Activated B cell treated with CpG ODN at 0.5 μM for 24 hours (primary cell): ENCODE measurements at regions of chr10 and their contacts with region 1.

Region 1: GRCh38 chr10:124601431-124602120 is 140.0 kb downstream of the LHPP start:
- DNase-seq: peak; percentile 75
- ATAC-seq: peak; percentile 86
- H3K4me3 Mint-ChIP-seq: peak overlapping the region; percentile 70
- H3K27ac Mint-ChIP-seq: peak overlapping the region; percentile 94
- H3K4me1 Mint-ChIP-seq: peaks cover 97% of the 10 kb centered on the region
- H3K27me3 Mint-ChIP-seq: no peaks in the 10 kb centered on the region
- CTCF ChIP-seq: no peak

Region 2: DNA sequence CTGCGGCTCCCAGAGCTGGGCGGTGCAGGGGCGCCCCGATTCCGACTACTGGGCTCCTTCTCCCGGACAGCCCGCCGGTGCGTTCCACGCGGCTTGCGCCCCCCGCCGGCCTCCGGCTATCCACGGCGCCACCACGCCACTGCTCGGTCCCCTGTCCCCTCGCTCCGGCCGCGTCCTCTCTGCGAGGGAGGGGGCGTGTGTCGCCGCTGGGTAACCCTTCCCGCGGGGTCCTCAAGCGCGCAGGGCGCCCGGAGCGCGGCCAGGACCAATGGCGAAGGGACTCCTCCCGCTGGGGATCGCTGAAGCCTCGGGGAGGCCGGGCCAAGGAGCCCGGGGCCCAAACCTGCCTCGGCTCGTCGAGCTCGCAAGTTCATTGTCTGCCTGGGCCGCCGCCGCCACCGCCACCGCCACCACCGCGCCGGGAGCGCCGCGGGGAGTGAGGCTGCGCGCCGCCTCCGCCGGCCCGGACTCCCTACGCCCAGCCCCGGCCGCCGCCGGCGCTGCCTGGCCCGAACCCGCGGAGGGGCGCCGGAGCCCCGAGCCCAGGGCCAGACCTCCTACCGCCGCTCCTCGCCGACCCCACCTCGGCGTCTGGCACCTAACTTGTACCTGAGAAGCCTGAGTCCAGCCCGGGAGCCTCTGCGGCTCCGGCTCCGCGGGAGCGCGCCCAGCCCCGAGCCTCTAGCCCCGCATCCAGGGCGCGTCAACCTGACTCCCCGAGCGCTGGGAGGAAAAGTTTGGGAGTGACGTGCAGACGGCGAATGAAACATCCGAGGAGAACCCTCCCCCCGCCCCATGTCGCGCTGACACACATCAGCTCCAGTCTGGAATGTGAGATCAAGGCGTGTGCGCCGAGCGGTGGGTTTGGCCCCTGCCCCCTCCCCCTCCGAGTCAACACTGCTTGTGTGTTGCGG is 508.5 kb before region 1 on chr10 and contains the start of gene CHST15:
- CTCF ChIA-PET with region 1: no interaction called
- POLR2A ChIA-PET with region 1: no interaction called
- intact Hi-C with region 1: loop called (anchors 10 kb)
- DNase-seq: peak; percentile 55
- ATAC-seq: peak; percentile 43
- H3K4me3 Mint-ChIP-seq: peak within 1 kb of the TSS; percentile 90
- H3K27ac Mint-ChIP-seq: peak within 1 kb of the TSS; percentile 71
- H3K4me1 Mint-ChIP-seq: peaks cover 51% of the 10 kb centered on the region
- H3K27me3 Mint-ChIP-seq: no peaks in the 10 kb centered on the region
- CTCF ChIP-seq: no peak
- total RNA-seq, gene CHST15: 12.1 and 13.8 TPM in 2 replicates

Region 3: DNA sequence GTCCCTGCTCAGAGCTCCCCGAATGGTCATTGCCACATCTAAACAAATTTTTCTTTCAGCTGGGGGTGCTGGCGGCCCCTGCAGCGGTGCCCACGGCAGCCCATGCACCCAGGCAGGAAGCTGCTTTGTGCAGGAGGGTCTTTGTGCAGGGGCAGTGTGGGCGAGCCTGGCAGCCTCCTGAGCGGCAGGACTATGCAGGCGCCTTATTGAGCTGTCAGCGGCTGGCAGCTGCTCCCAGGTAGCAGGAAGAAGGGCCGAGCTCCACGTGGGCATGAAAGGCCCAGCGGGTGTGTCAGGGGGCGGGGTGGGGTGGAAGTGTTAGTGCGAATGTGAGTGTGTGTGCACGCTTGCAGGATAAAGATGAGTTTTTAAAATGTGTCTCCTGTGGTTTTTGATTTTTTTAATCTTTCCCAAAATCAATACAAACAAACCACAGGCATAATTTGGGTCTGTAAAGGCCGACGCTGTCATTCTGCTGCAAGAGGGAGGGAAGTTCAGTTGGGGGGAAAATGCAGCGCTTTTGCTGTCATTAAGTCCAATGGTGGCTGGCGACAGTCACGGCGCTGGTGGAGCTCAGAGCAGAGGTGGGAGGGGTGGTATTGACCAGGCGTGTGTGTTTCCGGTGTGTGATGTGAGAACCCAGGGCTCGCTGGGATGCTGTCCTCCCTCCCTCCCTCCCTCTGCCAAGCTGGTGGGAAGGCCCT is 56.1 kb before region 1 on chr10:
- CTCF ChIA-PET with region 1: interaction called, 3 read pairs
- POLR2A ChIA-PET with region 1: interaction called, 64 read pairs
- intact Hi-C with region 1: loop called (anchors 1 kb)
- DNase-seq: no peak
- ATAC-seq: peak; percentile 7
- H3K4me3 Mint-ChIP-seq: peak overlapping the region; percentile 62
- H3K27ac Mint-ChIP-seq: peak overlapping the region; percentile 77
- H3K4me1 Mint-ChIP-seq: peaks cover 93% of the 10 kb centered on the region
- H3K27me3 Mint-ChIP-seq: no peaks in the 10 kb centered on the region
- CTCF ChIP-seq: no peak

Region 4: GRCh38 chr10:124612611-124613498 is 11.3 kb after region 1 on chr10:
- CTCF ChIA-PET with region 1: interaction called, 4 read pairs
- POLR2A ChIA-PET with region 1: interaction called, 207 read pairs
- intact Hi-C with region 1: loop called (anchors 1 kb)
- DNase-seq: no peak
- ATAC-seq: peak; percentile 54
- H3K4me3 Mint-ChIP-seq: peak overlapping the region; percentile 45
- H3K27ac Mint-ChIP-seq: peak overlapping the region; percentile 96
- H3K4me1 Mint-ChIP-seq: peaks cover 83% of the 10 kb centered on the region
- H3K27me3 Mint-ChIP-seq: no peaks in the 10 kb centered on the region
- CTCF ChIP-seq: no peak

Region 5: GRCh38 chr10:124641282-124642087 is 39.9 kb after region 1 on chr10:
- CTCF ChIA-PET with region 1: no interaction called
- POLR2A ChIA-PET with region 1: interaction called, 9 read pairs
- intact Hi-C with region 1: loop called (anchors 1 kb)
- DNase-seq: no peak
- ATAC-seq: peak; percentile 81
- H3K4me3 Mint-ChIP-seq: peak overlapping the region; percentile 74
- H3K27ac Mint-ChIP-seq: peak overlapping the region; percentile 94
- H3K4me1 Mint-ChIP-seq: peaks cover 100% of the 10 kb centered on the region
- H3K27me3 Mint-ChIP-seq: no peaks in the 10 kb centered on the region
- CTCF ChIP-seq: no peak

Region 6: DNA sequence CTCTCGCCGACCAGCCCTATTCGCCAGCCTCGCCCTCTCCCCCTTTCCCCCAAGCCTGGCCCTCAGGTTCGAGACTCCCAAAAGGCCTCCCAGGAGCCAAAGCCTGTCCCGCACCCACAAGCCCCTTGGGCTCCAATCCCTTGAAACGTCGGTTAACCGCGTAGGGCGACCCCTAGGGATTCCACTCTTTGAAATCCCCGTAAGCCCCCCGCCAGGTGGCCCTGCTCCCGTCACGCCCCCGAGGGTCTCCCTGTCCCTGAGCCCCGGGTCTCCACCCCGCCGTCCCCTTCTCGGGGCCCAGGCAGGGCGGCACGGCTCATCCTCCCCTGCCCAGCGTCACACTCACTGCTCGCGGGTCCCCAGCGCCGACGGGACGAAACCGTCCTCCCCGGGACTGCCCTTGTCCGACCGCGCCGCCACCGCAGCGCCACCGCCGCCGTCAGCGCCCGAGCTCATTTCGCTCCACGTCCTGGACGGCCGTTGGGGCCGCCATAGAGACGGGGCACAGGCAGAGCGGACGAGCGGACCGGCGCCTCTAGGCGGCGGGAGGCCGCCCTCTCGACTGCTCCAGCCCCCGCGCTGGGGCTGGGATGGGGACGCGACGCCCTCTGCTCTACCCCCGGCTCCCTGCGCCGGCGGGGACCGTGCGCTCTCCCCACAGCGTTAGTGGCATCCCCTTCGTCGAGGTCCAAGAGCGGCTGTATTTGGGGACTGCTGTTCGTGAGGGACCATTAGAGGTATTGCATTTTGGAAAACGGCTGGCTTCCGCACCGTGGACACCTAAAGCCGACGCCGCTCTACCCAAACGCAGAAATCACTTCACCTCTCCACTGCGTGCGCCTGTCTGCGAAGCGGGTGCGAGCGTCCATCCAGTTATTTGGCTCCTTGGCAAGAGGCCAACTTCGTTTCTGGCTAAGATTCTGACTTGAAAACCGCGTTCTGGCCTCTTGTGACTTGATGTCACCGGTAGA is 190.1 kb after region 1 on chr10 and contains the start of gene EEF1AKMT2:
- CTCF ChIA-PET with region 1: no interaction called
- POLR2A ChIA-PET with region 1: no interaction called
- intact Hi-C with region 1: loop called (anchors 5 kb)
- DNase-seq: peak; percentile 85
- ATAC-seq: peak; percentile 95
- H3K4me3 Mint-ChIP-seq: peak within 1 kb of the TSS; percentile 96
- H3K27ac Mint-ChIP-seq: peak within 1 kb of the TSS; percentile 91
- H3K4me1 Mint-ChIP-seq: peaks cover 25% of the 10 kb centered on the region
- H3K27me3 Mint-ChIP-seq: no peaks in the 10 kb centered on the region
- CTCF ChIP-seq: no peak
- total RNA-seq, gene EEF1AKMT2: 16.5 and 17.0 TPM in 2 replicates